HepG2 (cell line): ENCODE measurements at regions of chr5 and their contacts with region 1.

Region 1: DNA sequence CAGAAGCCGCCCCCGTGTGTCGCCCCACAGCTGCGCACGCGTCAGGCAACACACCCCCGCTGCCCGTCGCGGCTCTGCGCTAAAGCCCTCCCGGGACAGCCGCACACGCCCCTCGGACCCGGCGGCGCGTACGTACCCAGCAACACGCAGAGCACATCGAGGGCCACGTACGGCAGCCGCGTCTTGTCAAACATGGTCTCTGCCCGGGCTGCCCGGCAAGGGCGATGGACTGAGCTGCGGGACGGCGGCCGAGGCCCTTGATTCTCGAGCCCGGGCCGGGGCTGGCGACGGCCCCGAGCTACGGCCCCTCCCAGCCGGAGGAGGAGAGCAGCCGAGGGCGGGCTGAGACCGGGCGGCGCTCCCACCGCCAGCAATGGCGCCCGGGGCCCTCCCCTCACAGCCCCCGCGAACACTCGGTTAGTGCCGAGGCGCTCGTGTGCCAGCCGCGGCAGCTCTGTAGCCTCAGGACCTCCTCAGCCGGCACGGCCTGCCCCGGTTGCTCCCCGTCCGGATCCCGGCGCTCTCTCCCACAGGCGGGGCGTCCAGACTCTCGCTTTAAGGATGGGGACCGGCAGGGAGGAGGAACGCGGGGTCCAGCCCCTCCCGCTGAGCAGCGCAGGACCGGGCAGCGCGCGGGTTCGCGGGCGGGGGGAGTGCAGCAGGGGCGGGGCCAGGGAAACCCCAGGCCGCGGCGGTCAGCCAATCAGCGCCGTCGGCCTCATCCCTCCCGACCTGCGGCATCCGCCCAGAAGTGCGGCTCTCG is at the start of gene PLPP1:
- DNase-seq: peak; percentile 65
- ATAC-seq: peak; percentile 92
- H3K4me3 ChIP-seq: peak within 1 kb of the TSS; percentile 81 to 95 (median 89)
- H3K27ac ChIP-seq: peak within 1 kb of the TSS; percentile 64
- H3K4me1 ChIP-seq: peaks cover 24% of the 10 kb centered on the region
- H3K27me3 ChIP-seq: no peaks in the 10 kb centered on the region
- CTCF ChIP-seq: peak; percentile 26; the same call in 1 of the 2 replicates
- EP300 ChIP-seq: no peak
- POLR2A ChIP-seq: peak; percentile 37 to 58; a peak in 2 of 4 replicates
- RAD21 ChIP-seq: peak; percentile 32; the same call in 1 of the 2 replicates
- total RNA-seq, gene PLPP1: 5.2 and 7.3 TPM in 2 replicates

Region 2: GRCh38 chr5:55546947-55547346 is 12.3 kb after region 1 on chr5:
- CTCF ChIA-PET with region 1: no interaction called
- POLR2A ChIA-PET with region 1: interaction called, 4 read pairs
- in situ Hi-C with region 1: no loop called
- intact Hi-C with region 1: loop called (anchors 1 kb)
- DNase-seq: peak; percentile 28
- ATAC-seq: peak; percentile 90
- H3K4me3 ChIP-seq: no peak overlapping the region
- H3K27ac ChIP-seq: no peak overlapping the region
- H3K4me1 ChIP-seq: peaks cover 38% of the 10 kb centered on the region
- H3K27me3 ChIP-seq: no peaks in the 10 kb centered on the region
- CTCF ChIP-seq: peak; percentile 53
- EP300 ChIP-seq: no peak
- POLR2A ChIP-seq: no peak
- RAD21 ChIP-seq: no peak

Region 3: GRCh38 chr5:55636683-55637082 is 102.1 kb after region 1 on chr5:
- CTCF ChIA-PET with region 1: no interaction called
- POLR2A ChIA-PET with region 1: no interaction called
- in situ Hi-C with region 1: no loop called
- intact Hi-C with region 1: no loop called
- DNase-seq: peak; percentile 39
- ATAC-seq: peak; percentile 67; the same call in 2 of the 3 replicates
- H3K4me3 ChIP-seq: no peak overlapping the region
- H3K27ac ChIP-seq: no peak overlapping the region
- H3K4me1 ChIP-seq: peaks cover 11% of the 10 kb centered on the region
- H3K27me3 ChIP-seq: no peaks in the 10 kb centered on the region
- CTCF ChIP-seq: no peak
- EP300 ChIP-seq: no peak
- POLR2A ChIP-seq: no peak
- RAD21 ChIP-seq: no peak

Region 4: GRCh38 chr5:56259002-56259511 is 724.4 kb after region 1 on chr5:
- CTCF ChIA-PET with region 1: no interaction called
- POLR2A ChIA-PET with region 1: no interaction called
- in situ Hi-C with region 1: no loop called
- intact Hi-C with region 1: no loop called
- DNase-seq: peak; percentile 63
- ATAC-seq: peak; percentile 66; the same call in 1 of the 3 replicates
- H3K4me3 ChIP-seq: no peak overlapping the region
- H3K27ac ChIP-seq: no peak overlapping the region
- H3K4me1 ChIP-seq: peaks cover 18% of the 10 kb centered on the region
- H3K27me3 ChIP-seq: peaks cover 0 to under 1% of the 10 kb centered on the region in 2 experiments; a peak in 1 of 5 replicates
- CTCF ChIP-seq: no peak
- EP300 ChIP-seq: no peak
- POLR2A ChIP-seq: no peak
- RAD21 ChIP-seq: no peak